ENCODE measurements at regions of chr4 and their contacts with region 1.

Region 1: DNA sequence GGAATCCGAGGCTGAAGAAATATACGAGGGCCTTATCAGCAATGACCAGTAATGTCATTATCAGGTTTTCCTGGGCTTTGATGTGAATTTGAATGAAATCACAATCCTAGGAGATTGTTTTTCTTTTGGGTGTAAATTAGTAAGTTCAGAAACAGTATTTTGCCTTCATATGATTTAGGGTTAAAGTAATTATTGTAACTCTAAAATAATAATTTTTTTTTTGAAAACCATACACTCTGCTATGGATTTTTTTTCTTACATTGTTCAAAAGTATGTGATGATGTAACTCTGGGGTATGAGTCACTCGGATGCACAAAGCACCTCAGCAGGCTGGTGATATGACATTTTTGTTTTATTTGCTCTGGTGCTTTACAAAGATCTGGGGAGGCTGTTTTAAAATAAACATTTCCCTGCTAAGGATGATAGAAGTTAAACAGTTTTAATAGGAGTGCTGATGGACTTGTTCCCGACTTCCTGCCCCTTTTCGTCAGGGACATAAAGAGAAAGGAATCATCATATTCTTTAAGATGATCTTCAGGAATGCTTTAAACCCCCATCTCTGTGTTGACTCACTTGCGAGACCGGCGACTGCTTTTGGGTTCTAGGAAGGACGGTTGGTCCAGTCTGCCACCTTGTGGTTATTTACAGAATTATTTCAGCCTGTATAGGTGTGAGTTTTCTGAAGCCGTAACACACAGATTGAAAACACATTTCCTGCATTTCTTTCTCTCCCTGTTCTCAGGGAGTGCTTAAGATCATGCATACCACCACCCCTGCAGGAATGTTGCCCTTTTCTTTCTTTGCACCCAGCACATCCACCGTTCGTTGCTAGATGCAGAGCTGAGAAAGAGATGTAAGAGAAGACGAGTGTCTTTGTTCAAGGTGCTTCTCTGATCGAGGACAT is 72.5 kb downstream of the RAPGEF2 start:
- DNase-seq: peak; percentile 70
- H3K4me3 ChIP-seq: no peak overlapping the region
- H3K27ac ChIP-seq: no peak overlapping the region
- H3K4me1 ChIP-seq: peaks cover 10% of the 10 kb centered on the region
- H3K27me3 ChIP-seq: no peaks in the 10 kb centered on the region
- CTCF ChIP-seq: peak; percentile 81

Region 2: GRCh38 chr4:158722917-158723793 is 452.2 kb before region 1 on chr4 and contains the start of gene PPID:
- intact Hi-C with region 1: loop called (anchors 10 kb)
- DNase-seq: peak; percentile 92
- H3K4me3 ChIP-seq: peak within 1 kb of the TSS; percentile 89
- H3K27ac ChIP-seq: peak within 1 kb of the TSS; percentile 92
- H3K4me1 ChIP-seq: no peaks in the 10 kb centered on the region
- H3K27me3 ChIP-seq: no peaks in the 10 kb centered on the region
- CTCF ChIP-seq: no peak
- total RNA-seq, gene PPID: 20.3 to 48.5 TPM

Region 3: DNA sequence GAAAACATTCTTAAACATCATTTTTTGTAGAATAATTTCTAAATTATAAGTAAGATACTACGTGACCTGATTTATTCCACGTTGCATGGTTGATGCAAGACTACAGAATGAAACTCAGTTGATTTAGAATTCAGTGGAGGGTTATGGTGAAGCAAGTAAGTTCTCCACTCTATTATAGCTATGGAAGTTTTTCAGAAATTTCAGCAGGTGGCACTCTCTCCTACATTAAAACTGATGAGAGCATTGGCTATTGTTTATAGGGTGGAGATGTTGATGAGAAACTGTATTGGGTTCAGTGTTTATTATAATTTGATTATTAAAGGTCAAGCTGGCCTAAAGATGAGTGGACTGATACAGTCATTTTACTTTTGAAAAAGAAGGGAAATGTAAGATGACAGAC is 318.5 kb before region 1 on chr4:
- intact Hi-C with region 1: loop called (anchors 5 kb)
- DNase-seq: no peak
- H3K4me3 ChIP-seq: no peak overlapping the region
- H3K27ac ChIP-seq: no peak overlapping the region
- H3K4me1 ChIP-seq: no peaks in the 10 kb centered on the region
- H3K27me3 ChIP-seq: no peaks in the 10 kb centered on the region
- CTCF ChIP-seq: peak; percentile 43

Region 4: GRCh38 chr4:158929939-158930638 is 245.2 kb before region 1 on chr4:
- intact Hi-C with region 1: no loop called
- DNase-seq: no peak
- H3K4me3 ChIP-seq: no peak overlapping the region
- H3K27ac ChIP-seq: no peak overlapping the region
- H3K4me1 ChIP-seq: no peaks in the 10 kb centered on the region
- H3K27me3 ChIP-seq: no peaks in the 10 kb centered on the region
- CTCF ChIP-seq: no peak

Region 5: DNA sequence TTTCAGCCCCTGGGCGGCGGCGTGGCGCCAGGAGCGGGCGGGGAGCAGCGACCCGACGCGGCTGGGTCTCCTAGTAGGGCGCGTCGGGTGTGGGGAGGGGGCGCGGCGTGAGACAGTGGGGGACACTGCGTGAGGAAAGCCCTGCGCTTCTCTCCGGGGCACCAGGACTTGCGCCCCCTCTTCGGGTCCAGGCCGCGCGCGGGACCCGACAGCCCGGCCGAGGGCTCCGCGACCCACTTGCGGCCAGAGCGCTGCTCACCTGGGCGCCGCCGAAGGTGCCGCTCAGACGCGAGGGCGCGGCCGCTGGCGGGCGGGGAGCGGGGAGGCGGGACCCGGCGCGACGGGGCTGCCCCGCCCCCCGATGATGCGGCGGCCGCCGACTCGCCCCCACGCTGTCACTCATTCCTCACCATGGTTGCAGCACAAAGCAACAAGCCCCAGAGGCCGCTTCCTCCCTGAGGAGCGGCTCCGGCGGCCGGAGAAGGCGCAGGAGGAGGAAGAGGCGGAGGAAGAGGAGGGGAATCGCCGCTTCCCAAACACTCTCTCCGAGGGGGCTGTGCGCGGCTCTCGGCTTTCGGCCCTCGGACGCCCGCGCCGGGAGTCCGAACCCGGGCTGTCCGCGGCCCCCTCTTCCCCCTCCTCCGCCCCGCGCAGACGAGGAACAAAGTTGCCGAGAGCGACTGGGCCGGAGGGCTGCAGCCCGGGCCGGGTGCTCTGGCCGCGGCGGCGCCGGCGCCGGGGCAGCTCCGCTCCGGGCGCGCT is 72.5 kb before region 1 on chr4 and contains the start of gene RAPGEF2:
- intact Hi-C with region 1: loop called (anchors 10 kb)
- DNase-seq: peak; percentile 95
- H3K4me3 ChIP-seq: peak within 1 kb of the TSS; percentile 92
- H3K27ac ChIP-seq: peak within 1 kb of the TSS; percentile 98
- H3K4me1 ChIP-seq: peaks cover 11% of the 10 kb centered on the region
- H3K27me3 ChIP-seq: no peaks in the 10 kb centered on the region
- CTCF ChIP-seq: no peak
- total RNA-seq, gene RAPGEF2: 22.8 to 40.0 TPM

Region 6: GRCh38 chr4:159220353-159220752 is 45.0 kb after region 1 on chr4:
- intact Hi-C with region 1: no loop called
- DNase-seq: no peak
- H3K4me3 ChIP-seq: no peak overlapping the region
- H3K27ac ChIP-seq: no peak overlapping the region
- H3K4me1 ChIP-seq: peaks cover 3% of the 10 kb centered on the region
- H3K27me3 ChIP-seq: no peaks in the 10 kb centered on the region
- CTCF ChIP-seq: no peak